ENCODE measurements at regions of chr1 and their contacts with region 1.

Region 1: GRCh38 chr1:155323798-155324610 is 3.3 kb downstream of the RUSC1 start:
- DNase-seq: peak; percentile 97
- H3K4me3 Mint-ChIP-seq: peak overlapping the region; percentile 83
- H3K27ac Mint-ChIP-seq: peak overlapping the region; percentile 69
- H3K4me1 Mint-ChIP-seq: peaks cover 30% of the 10 kb centered on the region
- H3K27me3 Mint-ChIP-seq: no peaks in the 10 kb centered on the region

Region 2: GRCh38 chr1:155208541-155209311 is 115.3 kb before region 1 on chr1 and contains the start of gene MTX1:
- CTCF ChIA-PET with region 1: interaction called, 24 read pairs
- POLR2A ChIA-PET with region 1: interaction called, 3 read pairs
- intact Hi-C with region 1: no loop called
- DNase-seq: peak; percentile 92
- H3K4me3 Mint-ChIP-seq: peak within 1 kb of the TSS; percentile 83
- H3K27ac Mint-ChIP-seq: peak within 1 kb of the TSS; percentile 89
- H3K4me1 Mint-ChIP-seq: peaks cover 29% of the 10 kb centered on the region
- H3K27me3 Mint-ChIP-seq: no peaks in the 10 kb centered on the region
- total RNA-seq, gene MTX1: 45.2 to 47.9 TPM

Region 3: DNA sequence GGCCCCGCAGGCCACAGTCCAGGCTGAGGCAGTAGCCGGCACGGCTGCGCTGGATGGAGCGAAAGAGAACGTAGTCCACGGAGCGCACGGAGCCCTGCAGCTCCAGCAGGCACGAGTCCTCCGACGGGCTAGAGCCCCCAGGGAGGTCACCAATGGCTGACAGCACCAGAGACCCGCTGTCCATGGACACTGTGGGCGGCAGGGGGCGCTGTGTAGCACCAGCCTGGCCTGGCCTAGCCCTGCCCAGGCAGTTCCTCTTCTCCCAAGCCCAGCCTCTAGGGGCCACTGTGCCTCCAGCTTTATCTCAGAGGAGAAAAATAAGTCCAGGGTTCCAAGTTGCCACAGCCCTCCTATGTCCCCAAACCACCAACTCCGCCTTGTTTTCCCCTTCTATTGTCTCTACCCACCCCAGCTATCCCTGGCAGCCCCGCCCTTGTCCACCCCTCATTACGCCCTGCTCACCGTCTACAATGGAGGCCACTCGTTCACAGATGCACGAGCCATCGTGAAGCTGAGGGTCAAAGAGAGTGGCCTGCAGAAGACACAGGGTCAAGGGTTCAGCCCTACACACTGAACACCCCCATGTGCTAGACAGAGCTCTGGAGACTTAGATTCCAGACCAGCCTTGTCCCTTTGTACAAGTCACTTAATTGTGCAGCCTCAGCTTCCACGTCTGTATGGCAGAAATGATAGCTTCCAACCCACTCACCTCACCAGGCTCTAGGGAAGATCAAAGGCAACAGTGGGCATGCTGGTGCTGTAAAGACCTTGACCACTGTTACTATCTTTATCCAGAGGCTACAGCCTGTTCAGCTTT is 73.2 kb before region 1 on chr1:
- CTCF ChIA-PET with region 1: interaction called, 188 read pairs
- POLR2A ChIA-PET with region 1: interaction called, 5 read pairs
- intact Hi-C with region 1: loop called (anchors 1 kb)
- DNase-seq: peak; percentile 97
- H3K4me3 Mint-ChIP-seq: peak overlapping the region; percentile 39
- H3K27ac Mint-ChIP-seq: peak overlapping the region; percentile 31
- H3K4me1 Mint-ChIP-seq: peaks cover 33% of the 10 kb centered on the region
- H3K27me3 Mint-ChIP-seq: no peaks in the 10 kb centered on the region

Region 4: DNA sequence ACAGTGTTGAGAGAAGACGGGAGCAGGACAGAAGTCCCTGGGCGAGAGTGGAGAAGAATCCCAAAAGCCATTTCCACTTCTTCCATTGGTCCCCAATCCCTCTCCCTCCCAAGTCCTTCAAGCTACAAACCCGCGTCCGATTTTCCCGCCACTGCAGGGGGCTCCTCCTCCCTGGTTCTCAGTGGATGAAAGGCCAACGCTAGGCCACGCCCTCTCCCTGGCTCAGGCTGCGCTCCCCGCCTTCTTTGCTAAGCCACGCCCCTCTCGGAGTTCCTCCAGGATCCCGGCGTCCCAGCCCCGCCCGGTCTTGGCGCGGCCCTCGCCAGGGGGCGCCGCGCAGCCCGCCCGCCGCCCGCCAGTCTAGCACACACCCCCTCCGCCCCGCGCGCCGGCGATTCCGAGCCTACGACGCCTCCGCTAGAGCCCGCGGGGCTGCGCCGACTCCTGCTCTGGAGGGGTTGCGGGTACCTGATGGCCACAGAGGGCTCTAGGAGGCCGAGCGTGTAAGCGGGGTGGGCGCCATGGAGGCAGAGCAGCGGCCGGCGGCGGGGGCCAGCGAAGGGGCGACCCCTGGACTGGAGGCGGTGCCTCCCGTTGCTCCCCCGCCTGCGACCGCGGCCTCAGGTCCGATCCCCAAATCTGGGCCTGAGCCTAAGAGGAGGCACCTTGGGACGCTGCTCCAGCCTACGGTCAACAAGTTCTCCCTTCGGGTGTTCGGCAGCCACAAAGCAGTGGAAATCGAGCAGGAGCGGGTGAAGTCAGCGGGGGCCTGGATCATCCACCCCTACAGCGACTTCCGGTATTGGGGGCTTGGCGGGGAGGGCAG is 46.7 kb before region 1 on chr1 and contains the start of gene HCN3:
- CTCF ChIA-PET with region 1: interaction called, 22 read pairs
- POLR2A ChIA-PET with region 1: interaction called, 4 read pairs
- intact Hi-C with region 1: loop called (anchors 1 kb)
- DNase-seq: peak; percentile 96
- H3K4me3 Mint-ChIP-seq: peak within 1 kb of the TSS; percentile 65
- H3K27ac Mint-ChIP-seq: peak within 1 kb of the TSS; percentile 61
- H3K4me1 Mint-ChIP-seq: peaks cover 32% of the 10 kb centered on the region
- H3K27me3 Mint-ChIP-seq: no peaks in the 10 kb centered on the region
- total RNA-seq, gene HCN3: 1.9 to 2.4 TPM

Region 5: DNA sequence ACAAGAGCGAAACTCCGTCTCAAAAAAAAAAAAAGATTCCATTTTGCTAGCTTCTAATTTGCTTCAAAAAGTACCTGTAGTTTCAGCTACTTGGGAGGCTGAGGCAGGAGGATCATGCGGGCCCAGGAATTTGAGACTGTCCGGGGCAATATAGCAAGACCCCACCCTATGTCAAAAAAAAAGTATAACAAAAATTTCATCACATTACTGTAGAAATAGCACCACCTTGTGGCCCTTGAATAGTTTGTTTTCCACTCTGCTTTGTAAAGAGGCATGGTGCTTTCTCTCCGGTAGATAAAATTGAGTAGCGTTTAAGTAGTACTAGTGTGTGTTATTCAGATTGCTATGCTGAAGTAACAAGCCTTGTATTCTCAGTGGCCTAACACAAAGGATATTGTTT is 267.8 kb after region 1 on chr1:
- CTCF ChIA-PET with region 1: no interaction called
- POLR2A ChIA-PET with region 1: no interaction called
- intact Hi-C with region 1: loop called (anchors 10 kb)
- DNase-seq: no peak
- H3K4me3 Mint-ChIP-seq: no peak overlapping the region
- H3K27ac Mint-ChIP-seq: no peak overlapping the region
- H3K4me1 Mint-ChIP-seq: no peaks in the 10 kb centered on the region
- H3K27me3 Mint-ChIP-seq: no peaks in the 10 kb centered on the region

Measured in activated CD4-positive, alpha-beta memory T cell treated with anti-CD3 and anti-CD28 coated beads for 36 hours (primary cell).